ENCODE measurements at regions of chr5 and their contacts with region 1.

Region 1: GRCh38 chr5:140346348-140347101 is at the start of gene HBEGF:
- DNase-seq: peak; percentile 88 to 93 (median 90)
- ATAC-seq: peak; percentile 53 to 85 (median 78)
- H3K4me3 ChIP-seq: peak within 1 kb of the TSS; percentile 43 to 99 (median 86)
- H3K27ac ChIP-seq: peak within 1 kb of the TSS; percentile 54 to 99 (median 94)
- H3K4me1 ChIP-seq: peaks cover 8 to 64% (median 53%) of the 10 kb centered on the region in 12 donors
- H3K27me3 ChIP-seq: no peaks in the 10 kb centered on the region
- CTCF ChIP-seq: peak; percentile 25 to 75 (median 44)
- POLR2A ChIP-seq: peak; percentile 79 to 98
- total RNA-seq, gene HBEGF: 23.6 to 60.1 (median 34.9) TPM

Region 2: GRCh38 chr5:140073296-140073695 is 273.2 kb before region 1 on chr5:
- intact Hi-C with region 1: loop called in 5 of 10 experiments (anchors 10 kb)
- DNase-seq: no peak
- ATAC-seq: no peak
- H3K4me3 ChIP-seq: peak overlapping the region in 2 of 12 donors; percentile 2 to 10
- H3K27ac ChIP-seq: no peak overlapping the region
- H3K4me1 ChIP-seq: peaks cover 0 to 3% (median 0%) of the 10 kb centered on the region in 12 donors
- H3K27me3 ChIP-seq: peaks cover 0 to 4% (median 0%) of the 10 kb centered on the region in 9 donors
- CTCF ChIP-seq: peak; percentile 47 to 83 (median 74)
- POLR2A ChIP-seq: no peak

Region 3: GRCh38 chr5:140174465-140175366 is 171.8 kb before region 1 on chr5 and contains the start of gene CYSTM1:
- intact Hi-C with region 1: loop called in 6 of 10 experiments (anchors 2 to 5 kb)
- DNase-seq: peak; percentile 96 to 98 (median 98)
- ATAC-seq: peak; percentile 89 to 96 (median 94)
- H3K4me3 ChIP-seq: peak within 1 kb of the TSS; percentile 78 to 100 (median 92)
- H3K27ac ChIP-seq: peak within 1 kb of the TSS; percentile 86 to 100 (median 98)
- H3K4me1 ChIP-seq: peaks cover 0 to 42% (median 26%) of the 10 kb centered on the region in 12 donors
- H3K27me3 ChIP-seq: no peaks in the 10 kb centered on the region
- CTCF ChIP-seq: peak in 1 of 12 donors; percentile 15
- POLR2A ChIP-seq: peak in 1 of 2 donors; percentile 91
- total RNA-seq, gene CYSTM1: 58.1 to 222 (median 94.5) TPM

Region 4: GRCh38 chr5:140182803-140183367 is 163.6 kb before region 1 on chr5:
- intact Hi-C with region 1: loop called in 2 of 10 experiments (anchors 5 kb)
- DNase-seq: peak in 4 of 5 donors; percentile 39 to 62 (median 42)
- ATAC-seq: peak; percentile 54 to 76 (median 68)
- H3K4me3 ChIP-seq: no peak overlapping the region
- H3K27ac ChIP-seq: peak overlapping the region in 11 of 12 donors; percentile 14 to 80 (median 67)
- H3K4me1 ChIP-seq: peaks cover 0 to 67% (median 51%) of the 10 kb centered on the region in 12 donors
- H3K27me3 ChIP-seq: no peaks in the 10 kb centered on the region
- CTCF ChIP-seq: no peak
- POLR2A ChIP-seq: no peak

Region 5: DNA sequence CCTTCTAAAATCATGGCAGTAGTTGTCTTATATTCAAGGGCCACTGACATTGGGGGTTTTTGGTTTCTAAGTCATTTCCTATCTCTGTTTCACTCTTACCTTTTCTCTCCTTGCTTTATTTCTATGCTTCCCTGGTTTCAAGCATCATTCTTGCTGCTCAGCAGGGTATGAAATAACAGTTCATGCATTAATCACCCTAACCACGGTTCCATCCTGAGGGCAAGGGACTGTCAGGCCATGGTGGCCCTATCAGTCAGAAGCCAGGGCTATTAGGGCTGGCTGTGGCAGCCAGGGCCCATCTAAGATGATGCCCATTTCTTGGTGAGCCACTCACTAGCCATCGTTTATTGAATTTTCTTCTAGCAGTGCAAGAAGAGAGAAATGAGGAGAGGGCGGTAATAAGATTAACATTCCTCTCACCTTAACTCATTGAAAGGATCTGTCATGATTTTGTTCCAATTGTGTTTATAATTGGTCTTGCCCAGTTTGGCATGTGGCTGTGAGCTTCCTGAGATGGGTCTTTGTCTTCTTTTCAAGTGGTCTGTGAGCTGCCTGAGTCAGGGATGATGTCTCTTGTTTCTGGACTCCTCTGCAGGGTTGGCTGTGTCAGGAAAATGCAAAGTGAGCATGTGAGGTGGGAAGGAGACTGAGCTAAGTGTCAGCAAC is 126.4 kb before region 1 on chr5:
- intact Hi-C with region 1: no loop called
- DNase-seq: no peak
- ATAC-seq: no peak
- H3K4me3 ChIP-seq: no peak overlapping the region
- H3K27ac ChIP-seq: peak overlapping the region; percentile 34 to 87 (median 58)
- H3K4me1 ChIP-seq: peaks cover 5 to 94% (median 72%) of the 10 kb centered on the region in 12 donors
- H3K27me3 ChIP-seq: no peaks in the 10 kb centered on the region
- CTCF ChIP-seq: no peak
- POLR2A ChIP-seq: no peak

Region 6: DNA sequence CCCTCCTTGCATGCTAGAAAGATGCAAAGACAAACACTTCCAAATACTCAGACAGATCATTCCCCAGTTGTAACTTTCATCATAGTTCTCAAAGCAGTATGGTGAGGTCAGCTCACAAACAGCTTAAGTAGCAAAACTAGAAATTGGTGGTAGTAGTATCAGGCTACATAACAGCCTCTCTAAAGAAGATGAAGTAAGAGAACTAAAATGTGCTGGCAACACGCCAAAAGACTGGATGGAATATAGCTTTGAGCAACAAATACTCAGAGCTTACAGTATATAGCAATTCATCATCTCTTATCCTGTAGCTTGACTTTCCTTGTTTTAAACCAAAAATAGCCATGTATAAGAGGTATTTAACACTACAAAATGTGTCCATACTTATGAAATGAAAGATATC is 51.1 kb before region 1 on chr5:
- intact Hi-C with region 1: loop called in 8 of 10 experiments (anchors 1 to 5 kb)
- DNase-seq: peak in 4 of 5 donors; percentile 55 to 80 (median 73)
- ATAC-seq: peak; percentile 80 to 91 (median 86)
- H3K4me3 ChIP-seq: no peak overlapping the region
- H3K27ac ChIP-seq: peak overlapping the region; percentile 35 to 84 (median 72)
- H3K4me1 ChIP-seq: peaks cover 11 to 88% (median 75%) of the 10 kb centered on the region in 12 donors
- H3K27me3 ChIP-seq: no peaks in the 10 kb centered on the region
- CTCF ChIP-seq: no peak
- POLR2A ChIP-seq: no peak

Region 7: GRCh38 chr5:140302786-140303639 is 43.5 kb before region 1 on chr5 and contains the start of gene PFDN1:
- intact Hi-C with region 1: loop called in 4 of 10 experiments (anchors 5 kb)
- DNase-seq: peak; percentile 93 to 97 (median 95)
- ATAC-seq: peak; percentile 98 to 99 (median 99)
- H3K4me3 ChIP-seq: peak within 1 kb of the TSS; percentile 57 to 97 (median 80)
- H3K27ac ChIP-seq: peak within 1 kb of the TSS; percentile 51 to 94 (median 87)
- H3K4me1 ChIP-seq: peaks cover 3 to 39% (median 26%) of the 10 kb centered on the region in 12 donors
- H3K27me3 ChIP-seq: no peaks in the 10 kb centered on the region
- CTCF ChIP-seq: no peak
- POLR2A ChIP-seq: no peak
- total RNA-seq, gene PFDN1: 53.8 to 130 (median 72.3) TPM

Region 8: GRCh38 chr5:140547508-140548299 is 201.2 kb after region 1 on chr5 and contains the start of gene EIF4EBP3:
- intact Hi-C with region 1: no loop called
- DNase-seq: peak; percentile 97 to 98 (median 98)
- ATAC-seq: peak; percentile 90 to 96 (median 94)
- H3K4me3 ChIP-seq: peak within 1 kb of the TSS; percentile 25 to 65 (median 54)
- H3K27ac ChIP-seq: peak within 1 kb of the TSS; percentile 83 to 98 (median 94)
- H3K4me1 ChIP-seq: peaks cover 14 to 50% (median 43%) of the 10 kb centered on the region in 12 donors
- H3K27me3 ChIP-seq: no peaks in the 10 kb centered on the region
- CTCF ChIP-seq: peak; percentile 35 to 81 (median 56)
- POLR2A ChIP-seq: peak in 1 of 2 donors; percentile 83
- total RNA-seq, gene EIF4EBP3: 4.7 to 34.9 (median 14.6) TPM